PC-3 (cell line): ENCODE measurements at regions of chr3 and their contacts with region 1.

Region 1: DNA sequence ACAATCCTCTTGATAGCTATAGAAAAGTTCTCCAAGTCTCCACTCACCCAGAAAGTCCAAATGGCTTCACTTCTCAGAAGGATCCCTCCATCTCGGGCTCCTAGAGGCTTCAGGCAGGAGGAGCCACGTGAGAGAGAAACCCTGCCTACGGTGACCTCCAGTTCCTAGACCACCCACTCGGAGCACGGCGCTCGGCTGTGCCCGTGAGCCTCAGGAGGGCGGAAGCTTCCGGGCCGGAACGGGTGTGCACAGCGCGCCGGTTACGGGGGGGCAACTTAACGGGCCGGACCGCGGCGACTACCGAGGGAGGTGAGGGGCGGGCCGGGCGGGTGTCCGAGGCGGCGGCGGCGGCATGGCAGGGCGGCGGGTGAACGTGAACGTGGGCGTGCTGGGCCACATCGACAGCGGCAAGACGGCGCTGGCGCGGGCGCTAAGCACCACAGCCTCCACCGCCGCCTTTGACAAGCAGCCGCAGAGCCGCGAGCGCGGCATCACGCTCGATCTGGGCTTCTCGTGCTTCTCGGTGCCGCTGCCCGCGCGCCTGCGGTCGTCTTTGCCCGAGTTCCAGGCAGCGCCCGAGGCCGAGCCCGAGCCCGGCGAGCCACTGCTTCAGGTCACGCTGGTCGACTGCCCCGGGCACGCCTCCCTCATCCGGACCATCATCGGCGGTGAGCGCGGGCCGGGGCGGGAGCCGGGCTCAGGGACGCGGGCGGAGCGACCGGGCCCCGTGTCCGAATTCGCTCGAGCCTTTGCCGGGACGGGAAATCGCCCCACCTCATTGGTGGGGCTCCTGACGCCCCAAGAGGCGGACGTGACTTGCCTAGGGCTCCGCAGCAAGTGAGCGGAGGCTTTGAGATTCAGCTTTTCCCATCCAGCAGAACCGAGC is at the start of gene EEFSEC:
- DNase-seq: peak; percentile 73
- ATAC-seq: peak; percentile 93
- H3K4me3 ChIP-seq: peak within 1 kb of the TSS; percentile 75
- H3K27ac ChIP-seq: peak within 1 kb of the TSS; percentile 32; the same call in 1 of the 2 replicates
- H3K4me1 ChIP-seq: no peaks in the 10 kb centered on the region
- H3K27me3 ChIP-seq: no peaks in the 10 kb centered on the region
- CTCF ChIP-seq: no peak
- total RNA-seq, gene EEFSEC: 9.6 and 11.6 TPM in 2 replicates

Region 2: GRCh38 chr3:128123538-128124368 is 29.6 kb before region 1 on chr3 and contains the start of gene RUVBL1:
- CTCF ChIA-PET with region 1: no interaction called
- POLR2A ChIA-PET with region 1: interaction called, 3 read pairs
- intact Hi-C with region 1: loop called (anchors 1 kb)
- DNase-seq: peak; percentile 96
- ATAC-seq: peak; percentile 100
- H3K4me3 ChIP-seq: peak within 1 kb of the TSS; percentile 94
- H3K27ac ChIP-seq: peak within 1 kb of the TSS; percentile 73
- H3K4me1 ChIP-seq: peaks cover 11% of the 10 kb centered on the region
- H3K27me3 ChIP-seq: no peaks in the 10 kb centered on the region
- CTCF ChIP-seq: no peak
- total RNA-seq, gene RUVBL1: 94.9 and 114 TPM in 2 replicates

Region 3: GRCh38 chr3:128416578-128417211 is 263.3 kb after region 1 on chr3:
- CTCF ChIA-PET with region 1: no interaction called
- POLR2A ChIA-PET with region 1: interaction called, 14 read pairs
- intact Hi-C with region 1: no loop called
- DNase-seq: peak; percentile 77
- ATAC-seq: peak; percentile 97
- H3K4me3 ChIP-seq: no peak overlapping the region
- H3K27ac ChIP-seq: no peak overlapping the region
- H3K4me1 ChIP-seq: peaks cover 7% of the 10 kb centered on the region
- H3K27me3 ChIP-seq: no peaks in the 10 kb centered on the region
- CTCF ChIP-seq: no peak